Dorsolateral prefrontal cortex (tissue), 120 donors: ENCODE measurements at regions of chr16 and their contacts with region 1.

Region 1: GRCh38 chr16:8173111-8173644 is 417.1 kb downstream of the TMEM114 start:
- DNase-seq: peak; percentile 51 to 78 (median 76)
- H3K4me3 ChIP-seq: peak overlapping the region in 3 of 59 donors; percentile 4 to 31 (median 18)
- H3K27ac ChIP-seq: no peak overlapping the region
- H3K27me3 ChIP-seq: peaks cover 0 to 18% (median 0%) of the 10 kb centered on the region in 45 donors
- CTCF ChIP-seq: peak; percentile 78 to 96 (median 88)

Region 2: GRCh38 chr16:6682142-6682811 is 1490.9 kb before region 1 on chr16:
- intact Hi-C with region 1: loop called in 1 of 2 experiments (anchors 2 kb)
- DNase-seq: peak in 8 of 10 donors; percentile 32 to 59 (median 42)
- H3K4me3 ChIP-seq: no peak overlapping the region
- H3K27ac ChIP-seq: no peak overlapping the region
- H3K27me3 ChIP-seq: peaks cover 0 to 6% (median 0%) of the 10 kb centered on the region in 45 donors
- CTCF ChIP-seq: peak; percentile 20 to 81 (median 66)

Region 3: GRCh38 chr16:8436931-8437330 is 263.8 kb after region 1 on chr16:
- intact Hi-C with region 1: no loop called
- DNase-seq: no peak
- H3K4me3 ChIP-seq: no peak overlapping the region
- H3K27ac ChIP-seq: no peak overlapping the region
- H3K27me3 ChIP-seq: peaks cover 0 to 10% (median 0%) of the 10 kb centered on the region in 45 donors
- CTCF ChIP-seq: no peak